AG04449 (cell line): ENCODE measurements at regions of chr1 and their contacts with region 1.

Region 1: GRCh38 chr1:200971955-200972711 is 51.4 kb downstream of the KIF21B start:
- DNase-seq: no peak
- H3K4me3 ChIP-seq: no peak overlapping the region
- CTCF ChIP-seq: peak; percentile 68

Region 2: GRCh38 chr1:200934676-200935245 is 37.4 kb before region 1 on chr1:
- CTCF ChIA-PET with region 1: no interaction called
- POLR2A ChIA-PET with region 1: no interaction called
- DNase-seq: no peak
- H3K4me3 ChIP-seq: no peak overlapping the region
- CTCF ChIP-seq: no peak

Region 3: GRCh38 chr1:200951016-200951415 is 21.1 kb before region 1 on chr1:
- CTCF ChIA-PET with region 1: interaction called, 77 read pairs
- POLR2A ChIA-PET with region 1: no interaction called
- DNase-seq: no peak
- H3K4me3 ChIP-seq: no peak overlapping the region
- CTCF ChIP-seq: no peak

Region 4: GRCh38 chr1:201023517-201023902 is 51.4 kb after region 1 on chr1 and contains the start of gene KIF21B:
- CTCF ChIA-PET with region 1: interaction called, 26 read pairs
- POLR2A ChIA-PET with region 1: no interaction called
- DNase-seq: no peak
- H3K4me3 ChIP-seq: peak within 1 kb of the TSS; percentile 64
- CTCF ChIP-seq: no peak

Region 5: GRCh38 chr1:201085916-201086735 is 114.0 kb after region 1 on chr1:
- CTCF ChIA-PET with region 1: interaction called, 39 read pairs
- POLR2A ChIA-PET with region 1: no interaction called
- DNase-seq: no peak
- H3K4me3 ChIP-seq: no peak overlapping the region
- CTCF ChIP-seq: peak; percentile 76

Region 6: DNA sequence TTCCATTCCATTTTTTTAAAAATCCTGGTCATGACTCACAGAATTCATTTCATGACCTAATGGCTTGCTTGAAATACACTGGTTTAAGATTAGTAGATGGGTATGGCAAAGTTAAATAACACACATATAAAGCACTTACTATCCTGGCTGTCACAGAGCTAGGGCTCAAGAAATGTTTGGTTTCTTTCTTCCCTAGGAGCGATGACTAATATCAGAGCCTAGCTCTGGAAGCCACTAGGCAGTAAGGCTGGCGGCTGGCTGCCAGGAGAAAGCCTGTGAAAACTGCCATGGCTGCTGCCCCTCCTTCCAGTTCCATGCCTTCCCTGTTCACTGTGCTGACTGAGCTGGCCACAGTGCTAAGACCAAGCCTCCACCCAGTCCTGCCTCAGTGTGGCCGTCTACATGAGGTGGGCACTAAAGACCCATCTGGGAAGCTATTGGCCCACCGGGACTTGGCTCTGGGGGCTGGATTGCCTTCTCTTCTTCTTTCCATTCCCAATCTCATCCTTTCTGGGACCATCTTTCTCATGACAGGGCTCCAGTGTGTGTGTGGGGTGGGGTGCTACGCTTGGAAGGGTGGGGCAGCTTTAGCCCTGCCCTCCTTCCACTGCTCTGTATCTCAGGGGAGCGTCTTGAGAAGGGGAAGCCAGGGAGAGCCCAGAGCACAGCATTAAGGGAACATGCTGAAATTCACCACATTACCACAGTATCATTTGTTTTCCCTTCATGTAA is 165.6 kb after region 1 on chr1:
- CTCF ChIA-PET with region 1: interaction called, 14 read pairs
- POLR2A ChIA-PET with region 1: no interaction called
- DNase-seq: peak; percentile 81
- H3K4me3 ChIP-seq: no peak overlapping the region
- CTCF ChIP-seq: no peak